Sciatic nerve (tissue), 2 donors: ENCODE measurements at regions of chr4 and their contacts with region 1.

Region 1: GRCh38 chr4:8041172-8041571 is 101.5 kb upstream of the AFAP1 start:
- DNase-seq: no peak
- ATAC-seq: no peak

Region 2: DNA sequence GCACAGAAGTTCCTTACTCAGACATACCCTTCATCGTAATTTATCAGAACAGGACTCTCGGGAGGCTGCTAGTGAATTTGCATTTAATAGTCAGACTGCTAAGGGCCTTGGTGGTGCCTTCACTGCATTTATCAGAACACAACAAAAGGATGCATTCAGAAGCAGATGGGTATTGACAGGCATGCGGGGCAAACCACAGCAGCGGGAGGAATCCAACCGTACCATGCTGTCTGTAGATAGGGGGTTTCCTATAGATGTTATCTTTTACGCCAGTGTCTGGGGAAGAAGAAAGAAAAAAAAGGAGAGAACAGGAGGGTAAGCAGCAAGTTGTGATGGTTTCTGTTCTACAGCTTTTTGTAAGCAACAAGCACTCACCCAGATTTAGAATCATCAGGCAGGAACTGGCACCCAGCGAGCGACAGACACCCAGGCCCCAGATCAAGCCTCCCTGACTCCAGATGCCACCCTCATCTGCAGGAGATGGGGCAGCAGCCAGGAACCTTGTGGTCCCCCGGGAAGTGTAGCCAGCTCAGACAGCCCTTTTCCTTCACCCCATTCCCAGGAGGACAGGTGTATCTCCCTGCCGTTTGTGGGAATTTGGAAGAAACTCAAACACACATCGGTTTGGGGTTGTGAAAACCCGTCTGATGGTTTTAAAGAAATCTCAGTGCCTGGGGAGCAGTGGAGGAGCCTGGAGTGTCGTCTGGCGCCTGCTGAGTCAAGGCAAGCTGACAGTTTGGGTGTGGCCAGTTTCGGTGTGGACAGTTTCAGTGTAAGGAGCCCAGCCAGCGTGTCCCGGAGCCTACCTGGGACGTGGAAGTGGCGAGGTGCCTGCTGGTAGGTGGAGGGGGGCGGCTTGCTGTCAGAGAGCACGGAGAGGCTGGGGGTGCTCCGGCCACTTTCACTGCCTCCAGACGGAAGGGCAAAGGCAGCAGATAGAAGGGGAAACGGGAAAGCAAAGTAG is 21.5 kb before region 1 on chr4:
- intact Hi-C with region 1: loop called (anchors 1 kb)
- DNase-seq: no peak
- ATAC-seq: no peak